Astrocyte of the cerebellum (primary cell): ENCODE measurements at regions of chr15 and their contacts with region 1.

Region 1: GRCh38 chr15:81176291-81176893 is 20.3 kb upstream of the IL16 start:
- DNase-seq: no peak
- H3K4me3 ChIP-seq: no peak overlapping the region
- CTCF ChIP-seq: no peak

Region 2: DNA sequence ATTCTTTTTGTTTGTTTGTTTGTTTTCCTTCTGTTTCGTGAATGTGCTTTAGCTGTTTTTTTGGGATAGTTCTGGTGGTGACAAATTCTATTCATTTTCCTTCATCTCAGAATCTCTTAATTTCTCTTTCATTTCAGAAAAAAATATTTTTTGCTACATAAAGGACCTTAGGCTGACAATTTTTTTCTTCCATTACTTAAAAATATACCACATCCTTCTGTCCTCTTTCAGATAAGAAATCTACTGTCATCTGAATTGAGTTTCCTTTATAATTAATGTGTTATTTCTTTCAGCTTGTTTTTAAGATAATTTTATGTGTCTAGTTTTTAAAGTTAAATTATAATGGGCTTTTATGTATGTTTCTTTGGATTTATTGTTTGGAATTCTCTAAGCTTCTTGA is 67.9 kb after region 1 on chr15:
- in situ Hi-C with region 1: loop called (anchors 5 kb)
- DNase-seq: no peak
- H3K4me3 ChIP-seq: no peak overlapping the region
- CTCF ChIP-seq: no peak

Region 3: GRCh38 chr15:81265944-81266775 is 89.8 kb after region 1 on chr15:
- in situ Hi-C with region 1: loop called (anchors 10 kb)
- DNase-seq: peak; percentile 57
- H3K4me3 ChIP-seq: no peak overlapping the region
- CTCF ChIP-seq: peak; percentile 95